Common myeloid progenitor, CD34-positive (primary cell): ENCODE measurements at regions of chr2 and their contacts with region 1.

Region 1: GRCh38 chr2:172465417-172466334 is 38.3 kb downstream of the ITGA6 start:
- DNase-seq: peak; percentile 75 to 89 (median 85)
- H3K4me3 ChIP-seq: no peak overlapping the region
- H3K27ac ChIP-seq: no peak overlapping the region
- H3K4me1 ChIP-seq: peaks cover 29 to 51% (median 42%) of the 10 kb centered on the region in 4 experiments
- H3K27me3 ChIP-seq: no peaks in the 10 kb centered on the region

Region 2: GRCh38 chr2:171754254-171754939 is 711.3 kb before region 1 on chr2:
- CTCF ChIA-PET with region 1: no interaction called
- POLR2A ChIA-PET with region 1: no interaction called
- DNase-seq: no peak
- H3K4me3 ChIP-seq: no peak overlapping the region
- H3K27ac ChIP-seq: peak overlapping the region in 1 of 2 experiments; percentile 11
- H3K4me1 ChIP-seq: no peaks in the 10 kb centered on the region
- H3K27me3 ChIP-seq: no peaks in the 10 kb centered on the region

Region 3: GRCh38 chr2:172155752-172156151 is 309.9 kb before region 1 on chr2:
- CTCF ChIA-PET with region 1: interaction called, 19 read pairs
- POLR2A ChIA-PET with region 1: no interaction called
- DNase-seq: no peak
- H3K4me3 ChIP-seq: no peak overlapping the region
- H3K27ac ChIP-seq: no peak overlapping the region
- H3K4me1 ChIP-seq: peaks cover 0 to 12% (median 10%) of the 10 kb centered on the region in 4 experiments
- H3K27me3 ChIP-seq: no peaks in the 10 kb centered on the region

Region 4: GRCh38 chr2:172215172-172215935 is 250.3 kb before region 1 on chr2:
- CTCF ChIA-PET with region 1: interaction called, 13 read pairs
- POLR2A ChIA-PET with region 1: no interaction called
- DNase-seq: no peak
- H3K4me3 ChIP-seq: no peak overlapping the region
- H3K27ac ChIP-seq: no peak overlapping the region
- H3K4me1 ChIP-seq: peaks cover 5 to 54% (median 31%) of the 10 kb centered on the region in 4 experiments
- H3K27me3 ChIP-seq: no peaks in the 10 kb centered on the region

Region 5: GRCh38 chr2:172285010-172285621 is 180.6 kb before region 1 on chr2:
- CTCF ChIA-PET with region 1: interaction called, 22 read pairs
- POLR2A ChIA-PET with region 1: no interaction called
- DNase-seq: peak in 1 of 3 donors; percentile 14
- H3K4me3 ChIP-seq: no peak overlapping the region
- H3K27ac ChIP-seq: no peak overlapping the region
- H3K4me1 ChIP-seq: peaks cover 17 to 64% (median 60%) of the 10 kb centered on the region in 4 experiments
- H3K27me3 ChIP-seq: no peaks in the 10 kb centered on the region

Region 6: DNA sequence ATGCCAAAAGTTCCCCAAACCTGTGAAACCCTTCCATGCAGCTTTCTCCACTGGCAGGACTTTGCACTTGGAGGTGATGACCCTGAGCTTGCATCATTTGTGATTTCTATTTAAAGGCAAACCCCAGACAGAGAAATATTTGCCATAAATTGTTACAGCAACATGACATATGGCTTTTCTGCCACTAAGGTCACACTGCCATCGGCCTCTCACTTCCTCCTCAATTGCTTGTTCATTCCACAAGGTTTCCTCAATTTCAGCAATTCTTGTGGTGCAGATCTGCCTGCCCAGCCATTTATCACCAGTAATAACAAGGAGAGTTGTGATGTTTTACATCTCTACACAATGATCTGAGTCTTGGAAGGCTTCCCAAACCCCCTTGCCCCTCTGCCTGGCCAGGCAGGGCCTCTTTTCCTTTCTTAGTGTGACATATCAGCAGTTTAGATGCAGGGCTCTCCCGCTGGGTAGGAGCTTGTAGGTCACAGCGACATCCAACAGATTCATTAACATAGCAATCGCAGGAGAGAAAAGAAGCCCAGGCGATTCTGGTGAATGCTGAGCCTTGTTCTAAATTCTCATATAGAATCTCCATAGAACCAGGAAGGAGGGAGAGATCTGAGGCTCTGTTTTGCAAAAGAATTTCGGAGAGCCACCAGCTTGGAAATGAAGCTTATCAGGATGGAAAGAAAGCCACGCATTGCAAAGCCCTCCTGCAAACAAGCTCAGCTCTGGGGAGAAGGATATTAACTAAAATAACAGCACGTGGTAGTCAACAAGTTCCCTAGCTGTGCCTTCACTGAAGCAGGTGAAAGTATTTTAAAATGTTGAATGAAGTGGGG is 85.0 kb before region 1 on chr2:
- CTCF ChIA-PET with region 1: interaction called, 18 read pairs
- POLR2A ChIA-PET with region 1: no interaction called
- DNase-seq: peak; percentile 34 to 86 (median 82)
- H3K4me3 ChIP-seq: peak overlapping the region in 4 of 7 experiments; percentile 19 to 53 (median 28)
- H3K27ac ChIP-seq: no peak overlapping the region
- H3K4me1 ChIP-seq: peaks cover 3 to 25% (median 21%) of the 10 kb centered on the region in 4 experiments
- H3K27me3 ChIP-seq: no peaks in the 10 kb centered on the region

Region 7: GRCh38 chr2:172452845-172453244 is 12.8 kb before region 1 on chr2:
- CTCF ChIA-PET with region 1: interaction called, 515 read pairs
- POLR2A ChIA-PET with region 1: no interaction called
- DNase-seq: no peak
- H3K4me3 ChIP-seq: no peak overlapping the region
- H3K27ac ChIP-seq: no peak overlapping the region
- H3K4me1 ChIP-seq: peaks cover 2 to 26% (median 23%) of the 10 kb centered on the region in 4 experiments
- H3K27me3 ChIP-seq: no peaks in the 10 kb centered on the region